Heart right ventricle (tissue), 16 donors: ENCODE measurements at regions of chr1 and their contacts with region 1.

Region 1: GRCh38 chr1:33300673-33301072 is 20.2 kb downstream of the A3GALT2 start:
- DNase-seq: peak in 1 of 2 donors; percentile 54
- ATAC-seq: peak in 2 of 8 donors; percentile 41 to 49
- H3K4me3 ChIP-seq: no peak overlapping the region
- H3K27ac ChIP-seq: no peak overlapping the region
- H3K4me1 ChIP-seq: peaks cover 0 to 35% (median 21%) of the 10 kb centered on the region in 9 donors
- H3K27me3 ChIP-seq: no peaks in the 10 kb centered on the region
- CTCF ChIP-seq: no peak

Region 2: DNA sequence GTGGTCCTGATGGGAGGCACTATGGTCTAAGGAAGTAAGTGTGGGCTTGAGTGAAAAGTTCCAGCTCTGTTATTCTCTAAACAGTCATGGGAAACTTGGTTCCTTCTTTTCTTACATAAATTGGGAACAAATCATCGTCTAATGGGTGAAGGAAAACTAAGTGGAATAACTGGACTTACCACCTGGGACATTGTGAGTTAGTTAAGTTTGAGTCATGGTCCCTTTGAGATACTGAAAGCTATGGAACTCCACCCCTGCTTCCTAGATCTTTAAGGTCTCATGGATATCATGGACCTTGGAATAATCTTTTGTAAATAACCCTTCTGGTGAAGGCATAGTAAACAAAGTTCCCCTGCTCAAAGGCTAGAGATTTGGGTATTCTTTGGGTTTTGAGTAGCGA is 1137.3 kb before region 1 on chr1:
- intact Hi-C with region 1: no loop called
- DNase-seq: no peak
- ATAC-seq: no peak
- H3K4me3 ChIP-seq: no peak overlapping the region
- H3K27ac ChIP-seq: no peak overlapping the region
- H3K4me1 ChIP-seq: no peaks in the 10 kb centered on the region
- H3K27me3 ChIP-seq: no peaks in the 10 kb centered on the region
- CTCF ChIP-seq: no peak

Region 3: DNA sequence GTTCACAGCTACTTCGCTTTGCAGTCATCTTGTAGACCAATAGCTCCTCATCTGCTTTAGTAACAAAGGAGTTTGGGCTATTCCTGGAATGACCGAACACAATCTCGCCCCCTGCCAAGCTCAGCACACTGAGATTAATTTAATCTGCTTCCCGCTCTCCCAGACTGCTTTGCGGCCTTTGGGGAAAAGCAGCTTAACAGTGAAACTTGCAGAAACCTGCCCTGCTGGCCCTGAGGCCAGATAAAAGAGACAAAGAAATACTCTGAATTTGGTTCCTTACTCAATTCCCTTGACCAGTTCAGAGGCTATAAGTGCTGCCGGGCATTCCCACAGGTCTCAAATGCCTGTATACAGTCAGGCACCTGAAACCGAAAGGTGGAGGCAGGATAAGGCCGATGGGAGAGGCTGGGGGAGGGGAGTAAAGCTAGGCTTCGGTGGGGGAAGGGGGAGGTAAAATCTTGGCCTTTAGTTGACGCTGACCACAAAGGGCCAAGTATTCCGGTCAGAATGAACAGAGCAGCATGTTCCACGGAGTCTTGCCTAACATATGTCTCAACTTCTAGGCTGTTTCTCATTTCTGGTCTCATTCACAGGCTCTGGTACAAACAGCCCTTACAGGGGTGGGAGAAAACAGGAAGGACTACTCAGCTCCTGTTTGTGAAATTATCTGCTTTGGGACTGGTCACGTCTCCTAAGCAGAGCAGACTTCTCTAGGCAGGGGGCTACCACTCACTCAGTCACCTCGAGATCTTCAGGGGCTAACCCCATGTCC is 38.0 kb after region 1 on chr1:
- intact Hi-C with region 1: loop called in 1 of 10 experiments (anchors 5 kb)
- DNase-seq: peak in 1 of 2 donors; percentile 72
- ATAC-seq: peak; percentile 37 to 76 (median 62)
- H3K4me3 ChIP-seq: peak overlapping the region in 7 of 10 donors; percentile 0 to 30 (median 15)
- H3K27ac ChIP-seq: peak overlapping the region; percentile 46 to 100 (median 92)
- H3K4me1 ChIP-seq: peaks cover 65 to 100% (median 99%) of the 10 kb centered on the region in 9 donors
- H3K27me3 ChIP-seq: no peaks in the 10 kb centered on the region
- CTCF ChIP-seq: peak in 1 of 9 donors; percentile 12

Region 4: DNA sequence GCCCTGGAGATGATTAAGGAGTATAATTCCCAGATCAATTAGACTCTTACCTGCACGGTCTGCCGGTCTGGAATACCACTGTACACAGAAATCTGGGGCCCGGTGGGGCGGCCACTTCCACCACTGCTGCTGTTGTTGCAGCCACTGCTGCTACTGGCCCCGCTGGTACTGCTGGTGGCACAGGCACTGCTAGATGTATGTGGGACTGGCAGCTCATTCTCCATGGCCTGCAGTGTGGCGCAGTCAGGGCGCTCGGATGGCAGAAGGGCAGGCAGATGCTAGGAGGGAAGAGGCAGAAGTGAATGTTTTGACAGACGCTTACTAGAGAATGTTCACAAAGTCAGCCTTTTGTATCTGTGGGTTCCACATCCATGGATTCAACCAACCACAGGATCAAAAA is 74.6 kb after region 1 on chr1:
- intact Hi-C with region 1: no loop called
- DNase-seq: no peak
- ATAC-seq: no peak
- H3K4me3 ChIP-seq: no peak overlapping the region
- H3K27ac ChIP-seq: peak overlapping the region in 6 of 10 donors; percentile 54 to 86 (median 76)
- H3K4me1 ChIP-seq: peaks cover 0 to 64% (median 19%) of the 10 kb centered on the region in 9 donors
- H3K27me3 ChIP-seq: no peaks in the 10 kb centered on the region
- CTCF ChIP-seq: no peak

Region 5: DNA sequence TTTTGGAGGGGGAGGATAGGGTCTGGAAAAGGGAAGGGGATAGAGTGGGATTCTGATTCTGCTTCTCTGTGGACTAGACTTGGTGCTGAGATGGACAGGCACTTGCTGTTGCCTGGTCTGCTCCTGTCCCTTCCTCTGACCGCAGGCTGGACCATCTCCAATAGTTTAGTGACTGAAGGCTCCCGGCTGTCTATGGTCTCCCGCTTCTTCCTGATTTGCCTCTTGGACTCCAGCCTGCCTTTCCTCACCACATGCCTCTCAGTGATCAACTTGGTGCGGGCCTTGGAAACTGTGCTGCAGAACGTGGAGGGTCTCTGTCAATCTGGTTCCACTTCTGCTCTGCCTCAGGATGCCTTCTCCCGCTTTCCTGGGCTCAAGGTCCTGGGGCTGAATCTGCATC is 165.5 kb after region 1 on chr1:
- intact Hi-C with region 1: loop called in 9 of 10 experiments (anchors 1 to 5 kb)
- DNase-seq: peak in 1 of 2 donors; percentile 60
- ATAC-seq: peak in 4 of 8 donors; percentile 12 to 57 (median 38)
- H3K4me3 ChIP-seq: no peak overlapping the region
- H3K27ac ChIP-seq: peak overlapping the region in 2 of 10 donors; percentile 14 to 15
- H3K4me1 ChIP-seq: peaks cover 0 to 47% (median 28%) of the 10 kb centered on the region in 9 donors
- H3K27me3 ChIP-seq: no peaks in the 10 kb centered on the region
- CTCF ChIP-seq: no peak

Region 6: DNA sequence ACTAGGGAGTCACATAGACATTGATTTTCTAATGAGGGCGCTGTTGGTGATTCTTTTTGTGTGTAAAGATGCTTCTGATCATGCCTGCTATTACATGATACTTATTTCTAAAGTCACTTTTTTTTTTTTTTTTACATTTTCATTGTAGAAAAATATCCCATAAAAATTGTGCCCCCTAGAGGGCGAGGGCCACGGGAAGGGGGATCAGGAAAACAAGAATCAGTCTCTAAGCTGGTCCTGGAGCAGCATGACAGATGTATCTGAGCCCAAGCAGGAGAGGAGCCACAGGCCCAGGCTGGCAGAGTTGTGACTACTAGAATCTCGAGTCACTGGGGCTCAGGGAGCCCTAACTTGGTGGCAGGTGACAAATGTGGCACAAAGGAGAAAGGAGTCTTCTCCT is 199.9 kb after region 1 on chr1:
- intact Hi-C with region 1: no loop called
- DNase-seq: no peak
- ATAC-seq: no peak
- H3K4me3 ChIP-seq: no peak overlapping the region
- H3K27ac ChIP-seq: no peak overlapping the region
- H3K4me1 ChIP-seq: no peaks in the 10 kb centered on the region
- H3K27me3 ChIP-seq: no peaks in the 10 kb centered on the region
- CTCF ChIP-seq: peak in 1 of 9 donors; percentile 19